HepG2 (cell line): ENCODE measurements at regions of chr2 and their contacts with region 1.

Region 1: DNA sequence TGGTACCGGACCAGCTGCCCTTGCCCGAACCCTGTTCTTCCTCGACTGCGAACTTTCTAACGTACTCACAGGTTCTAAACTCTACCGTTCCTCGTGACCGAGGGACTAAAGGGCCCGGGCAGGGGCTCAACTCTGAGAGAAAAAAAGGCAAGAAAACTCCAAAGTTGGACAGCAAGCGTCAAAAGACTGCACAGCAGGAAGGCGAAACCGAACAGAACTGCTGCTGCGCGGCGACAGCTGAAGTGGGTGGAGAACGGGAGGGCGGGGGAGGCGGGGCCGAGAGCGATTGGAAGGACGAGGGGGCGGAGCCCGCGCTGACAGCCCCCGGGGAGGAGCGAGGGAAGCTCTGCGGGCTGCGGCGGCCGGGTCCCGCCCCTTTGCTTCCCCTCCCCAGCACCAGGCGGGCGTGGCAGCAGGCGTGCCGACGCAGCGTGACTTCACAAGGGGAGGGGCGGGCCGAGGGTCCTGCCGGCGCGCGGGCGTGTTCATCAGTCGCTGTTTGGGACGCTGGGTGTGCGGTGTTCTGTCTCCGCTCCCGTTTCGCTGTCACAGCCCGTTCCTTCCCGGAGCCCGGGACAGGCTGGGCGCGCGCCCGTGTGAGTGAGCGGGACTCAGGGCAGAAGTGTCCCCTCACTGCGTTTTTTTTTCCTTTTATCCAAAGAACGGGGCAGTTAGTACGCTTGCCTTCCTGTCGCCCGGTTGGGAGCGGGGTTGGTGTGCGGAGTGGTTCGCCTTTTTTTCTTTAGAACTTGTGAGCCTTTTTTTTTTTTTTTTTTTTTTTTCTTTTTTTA is at the start of gene NABP1:
- DNase-seq: peak; percentile 92
- ATAC-seq: peak; percentile 95
- H3K4me3 ChIP-seq: peak within 1 kb of the TSS; percentile 83 to 87 (median 86)
- H3K27ac ChIP-seq: peak within 1 kb of the TSS; percentile 73
- H3K4me1 ChIP-seq: peaks cover 39% of the 10 kb centered on the region
- H3K27me3 ChIP-seq: no peaks in the 10 kb centered on the region; a peak in 1 of 5 replicates
- CTCF ChIP-seq: no peak
- EP300 ChIP-seq: peak; percentile 14 to 53; a peak in 2 of 4 replicates
- POLR2A ChIP-seq: peak; percentile 100
- RAD21 ChIP-seq: peak; percentile 45; the same call in 1 of the 2 replicates
- total RNA-seq, gene NABP1: 4.9 and 14.9 TPM in 2 replicates

Region 2: DNA sequence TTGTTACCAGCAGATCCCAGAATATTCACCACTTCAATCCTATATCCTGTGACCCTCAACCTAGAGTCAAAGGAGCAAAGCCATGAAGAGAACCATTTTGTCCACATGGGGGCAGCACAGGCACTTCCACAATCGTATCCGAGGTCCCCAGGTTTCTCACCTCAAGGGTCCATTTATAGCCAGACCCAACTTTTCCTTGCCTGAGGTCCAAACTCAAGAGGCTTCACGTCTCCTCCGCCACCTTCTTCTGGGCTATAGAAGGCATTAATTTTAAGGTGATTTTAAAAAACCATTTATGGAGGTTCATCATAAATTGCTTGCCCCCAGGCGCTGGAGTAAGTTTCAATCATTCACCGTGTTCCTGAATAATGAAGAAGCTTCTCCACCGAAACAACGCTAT is 111.5 kb before region 1 on chr2:
- CTCF ChIA-PET with region 1: no interaction called
- POLR2A ChIA-PET with region 1: interaction called, 10 read pairs
- in situ Hi-C with region 1: no loop called
- intact Hi-C with region 1: loop called (anchors 1 kb)
- DNase-seq: peak; percentile 71
- ATAC-seq: peak; percentile 96
- H3K4me3 ChIP-seq: no peak overlapping the region
- H3K27ac ChIP-seq: no peak overlapping the region
- H3K4me1 ChIP-seq: peaks cover 11% of the 10 kb centered on the region
- H3K27me3 ChIP-seq: no peaks in the 10 kb centered on the region
- CTCF ChIP-seq: peak; percentile 88
- EP300 ChIP-seq: no peak
- POLR2A ChIP-seq: no peak
- RAD21 ChIP-seq: peak; percentile 75

Region 3: DNA sequence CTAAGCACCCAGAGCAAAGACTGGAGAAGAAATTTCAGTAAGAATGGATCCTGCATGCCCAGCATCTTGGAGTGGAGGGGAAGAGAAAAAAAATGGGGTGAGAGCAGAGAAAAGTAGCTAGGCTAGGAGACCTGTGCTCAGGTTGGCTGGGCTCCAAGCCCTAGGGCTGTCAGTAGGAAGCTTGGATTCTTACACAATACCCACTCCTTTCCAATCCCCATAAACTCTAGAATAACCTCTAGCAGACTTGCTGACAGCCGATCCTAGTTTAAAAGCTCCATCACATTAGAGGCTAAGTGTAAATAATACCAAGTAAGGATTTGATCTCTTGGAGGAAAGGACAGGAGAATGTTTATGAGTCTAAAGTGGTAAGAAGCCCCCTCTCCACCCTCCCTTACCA is 46.1 kb before region 1 on chr2:
- CTCF ChIA-PET with region 1: no interaction called
- POLR2A ChIA-PET with region 1: interaction called, 153 read pairs
- in situ Hi-C with region 1: loop called (anchors 5 kb)
- intact Hi-C with region 1: no loop called
- DNase-seq: peak; percentile 35
- ATAC-seq: peak; percentile 66
- H3K4me3 ChIP-seq: no peak overlapping the region
- H3K27ac ChIP-seq: no peak overlapping the region
- H3K4me1 ChIP-seq: peaks cover 21% of the 10 kb centered on the region
- H3K27me3 ChIP-seq: no peaks in the 10 kb centered on the region
- CTCF ChIP-seq: no peak
- EP300 ChIP-seq: no peak
- POLR2A ChIP-seq: no peak
- RAD21 ChIP-seq: no peak

Region 4: GRCh38 chr2:191637182-191638078 is 40.4 kb before region 1 on chr2:
- CTCF ChIA-PET with region 1: no interaction called
- POLR2A ChIA-PET with region 1: interaction called, 153 read pairs
- in situ Hi-C with region 1: loop called (anchors 5 kb)
- intact Hi-C with region 1: loop called (anchors 1 kb)
- DNase-seq: peak; percentile 95
- ATAC-seq: peak; percentile 96
- H3K4me3 ChIP-seq: peak overlapping the region in 2 of 3 experiments; percentile 25 to 27; a peak in 1 of 6 replicates
- H3K27ac ChIP-seq: peak overlapping the region; percentile 75
- H3K4me1 ChIP-seq: peaks cover 58% of the 10 kb centered on the region
- H3K27me3 ChIP-seq: no peaks in the 10 kb centered on the region
- CTCF ChIP-seq: no peak
- EP300 ChIP-seq: peak; percentile 46 to 98; a peak in 3 of 4 replicates
- POLR2A ChIP-seq: peak in 1 of 2 experiments; percentile 28; a peak in 1 of 4 replicates
- RAD21 ChIP-seq: no peak

Region 5: DNA sequence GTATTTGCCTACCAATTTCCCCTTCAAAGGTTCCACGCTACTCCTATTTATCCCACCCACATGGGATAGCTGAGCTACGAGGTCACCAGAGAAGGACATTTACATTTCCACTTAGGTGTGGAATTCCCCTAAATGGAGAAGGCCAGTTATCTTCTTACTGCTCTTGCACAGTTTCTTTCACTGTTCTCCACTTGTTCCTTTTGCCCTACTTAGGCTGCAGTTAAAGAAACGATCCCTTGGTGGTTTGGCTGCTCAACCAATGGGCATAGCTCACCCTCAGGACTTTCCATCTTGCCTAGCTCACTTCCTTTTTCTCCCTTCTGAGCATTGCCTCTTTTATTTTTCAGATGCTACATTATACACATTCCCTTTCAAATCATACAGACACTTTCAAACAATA is 11.1 kb before region 1 on chr2:
- CTCF ChIA-PET with region 1: no interaction called
- POLR2A ChIA-PET with region 1: interaction called, 32 read pairs
- in situ Hi-C with region 1: no loop called
- intact Hi-C with region 1: no loop called
- DNase-seq: no peak
- ATAC-seq: no peak
- H3K4me3 ChIP-seq: no peak overlapping the region
- H3K27ac ChIP-seq: no peak overlapping the region
- H3K4me1 ChIP-seq: no peaks in the 10 kb centered on the region
- H3K27me3 ChIP-seq: no peaks in the 10 kb centered on the region
- CTCF ChIP-seq: no peak
- EP300 ChIP-seq: no peak
- POLR2A ChIP-seq: no peak
- RAD21 ChIP-seq: no peak

Region 6: DNA sequence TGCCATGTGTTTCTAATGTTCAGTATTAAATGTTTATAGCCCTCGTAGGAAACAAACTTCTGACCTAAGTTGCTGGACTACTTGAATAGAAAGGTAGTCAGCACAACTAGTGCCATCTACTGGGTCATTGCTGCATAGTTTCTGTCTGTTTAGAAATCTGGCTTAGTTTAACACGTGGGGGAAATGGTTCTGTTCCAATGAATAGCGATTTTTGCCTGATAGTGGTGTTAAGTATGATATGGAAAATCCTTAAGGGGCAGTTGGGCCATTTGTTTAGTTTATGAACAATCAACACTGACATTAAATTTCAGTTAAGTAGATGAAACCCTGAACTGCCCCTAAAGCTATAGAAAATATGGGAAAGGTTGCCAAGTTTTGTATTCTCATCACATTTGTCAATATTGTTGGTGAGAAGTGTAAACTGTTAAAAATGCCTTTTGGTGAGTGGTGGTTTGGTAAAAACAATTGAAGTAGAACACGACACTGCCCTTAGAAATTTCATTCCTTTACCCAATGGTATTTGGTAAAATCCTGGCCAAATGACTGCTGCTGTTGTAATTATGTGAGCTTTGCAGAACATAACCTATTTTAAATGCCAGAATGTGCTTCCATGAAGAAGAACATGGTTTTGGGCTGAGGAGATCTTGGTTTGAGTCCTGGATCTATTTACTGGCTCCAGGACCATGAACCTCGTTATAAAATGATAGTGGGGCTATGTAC is 13.3 kb after region 1 on chr2:
- CTCF ChIA-PET with region 1: no interaction called
- POLR2A ChIA-PET with region 1: interaction called, 39 read pairs
- in situ Hi-C with region 1: no loop called
- intact Hi-C with region 1: loop called (anchors 1 kb)
- DNase-seq: peak; percentile 81
- ATAC-seq: peak; percentile 76
- H3K4me3 ChIP-seq: no peak overlapping the region
- H3K27ac ChIP-seq: no peak overlapping the region
- H3K4me1 ChIP-seq: peaks cover 37% of the 10 kb centered on the region
- H3K27me3 ChIP-seq: no peaks in the 10 kb centered on the region
- CTCF ChIP-seq: peak; percentile 89
- EP300 ChIP-seq: no peak
- POLR2A ChIP-seq: no peak
- RAD21 ChIP-seq: peak; percentile 84

Region 7: GRCh38 chr2:191869178-191869577 is 191.3 kb after region 1 on chr2:
- CTCF ChIA-PET with region 1: no interaction called
- POLR2A ChIA-PET with region 1: no interaction called
- in situ Hi-C with region 1: no loop called
- intact Hi-C with region 1: loop called (anchors 10 kb)
- DNase-seq: peak; percentile 67
- ATAC-seq: peak; percentile 8; the same call in 1 of the 3 replicates
- H3K4me3 ChIP-seq: no peak overlapping the region
- H3K27ac ChIP-seq: peak overlapping the region; percentile 1
- H3K4me1 ChIP-seq: peaks cover 69% of the 10 kb centered on the region
- H3K27me3 ChIP-seq: no peaks in the 10 kb centered on the region
- CTCF ChIP-seq: peak; percentile 74
- EP300 ChIP-seq: peak in 1 of 2 experiments; percentile 64; a peak in 1 of 4 replicates
- POLR2A ChIP-seq: no peak
- RAD21 ChIP-seq: peak; percentile 38; the same call in 1 of the 2 replicates